ENCODE measurements at regions of chr3 and their contacts with region 1.

Region 1: GRCh38 chr3:108292905-108293328 is 3.4 kb upstream of the HHLA2 start:
- DNase-seq: peak; percentile 23
- H3K4me3 Mint-ChIP-seq: peak overlapping the region; percentile 31
- H3K27ac Mint-ChIP-seq: peak overlapping the region; percentile 38
- H3K4me1 Mint-ChIP-seq: peaks cover 48% of the 10 kb centered on the region
- H3K27me3 Mint-ChIP-seq: no peaks in the 10 kb centered on the region

Region 2: GRCh38 chr3:108124337-108125152 is 168.4 kb before region 1 on chr3:
- CTCF ChIA-PET with region 1: no interaction called
- POLR2A ChIA-PET with region 1: interaction called, 6 read pairs
- intact Hi-C with region 1: loop called (anchors 1 kb)
- DNase-seq: peak; percentile 84
- H3K4me3 Mint-ChIP-seq: peak overlapping the region; percentile 91
- H3K27ac Mint-ChIP-seq: peak overlapping the region; percentile 99
- H3K4me1 Mint-ChIP-seq: peaks cover 55% of the 10 kb centered on the region
- H3K27me3 Mint-ChIP-seq: no peaks in the 10 kb centered on the region

Region 3: GRCh38 chr3:108202837-108203236 is 90.1 kb before region 1 on chr3:
- CTCF ChIA-PET with region 1: no interaction called
- POLR2A ChIA-PET with region 1: no interaction called
- intact Hi-C with region 1: loop called (anchors 1 kb)
- DNase-seq: no peak
- H3K4me3 Mint-ChIP-seq: no peak overlapping the region
- H3K27ac Mint-ChIP-seq: no peak overlapping the region
- H3K4me1 Mint-ChIP-seq: peaks cover 32% of the 10 kb centered on the region
- H3K27me3 Mint-ChIP-seq: no peaks in the 10 kb centered on the region

Region 4: DNA sequence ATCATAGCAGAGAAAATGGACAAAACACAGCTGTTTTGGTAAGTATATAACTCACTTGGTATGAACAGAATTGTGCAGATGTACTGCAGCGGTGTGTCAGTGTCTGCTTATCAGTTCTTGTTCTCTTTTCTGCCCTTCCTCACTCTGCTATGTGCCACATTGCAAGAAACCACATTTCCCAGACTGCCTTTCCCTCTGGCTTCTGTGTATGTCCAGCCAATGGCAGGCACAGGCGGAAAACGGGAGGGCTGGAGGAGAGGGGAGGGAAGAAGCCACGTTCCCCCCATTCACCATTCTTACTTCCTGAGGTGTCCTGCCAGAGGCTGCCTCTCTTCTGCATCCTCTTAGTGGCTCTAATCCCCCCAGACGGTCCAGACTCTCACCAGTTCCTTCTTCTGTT is 18.9 kb after region 1 on chr3:
- CTCF ChIA-PET with region 1: no interaction called
- POLR2A ChIA-PET with region 1: no interaction called
- intact Hi-C with region 1: no loop called
- DNase-seq: no peak
- H3K4me3 Mint-ChIP-seq: no peak overlapping the region
- H3K27ac Mint-ChIP-seq: no peak overlapping the region
- H3K4me1 Mint-ChIP-seq: no peaks in the 10 kb centered on the region
- H3K27me3 Mint-ChIP-seq: peaks cover 2% of the 10 kb centered on the region

Region 5: DNA sequence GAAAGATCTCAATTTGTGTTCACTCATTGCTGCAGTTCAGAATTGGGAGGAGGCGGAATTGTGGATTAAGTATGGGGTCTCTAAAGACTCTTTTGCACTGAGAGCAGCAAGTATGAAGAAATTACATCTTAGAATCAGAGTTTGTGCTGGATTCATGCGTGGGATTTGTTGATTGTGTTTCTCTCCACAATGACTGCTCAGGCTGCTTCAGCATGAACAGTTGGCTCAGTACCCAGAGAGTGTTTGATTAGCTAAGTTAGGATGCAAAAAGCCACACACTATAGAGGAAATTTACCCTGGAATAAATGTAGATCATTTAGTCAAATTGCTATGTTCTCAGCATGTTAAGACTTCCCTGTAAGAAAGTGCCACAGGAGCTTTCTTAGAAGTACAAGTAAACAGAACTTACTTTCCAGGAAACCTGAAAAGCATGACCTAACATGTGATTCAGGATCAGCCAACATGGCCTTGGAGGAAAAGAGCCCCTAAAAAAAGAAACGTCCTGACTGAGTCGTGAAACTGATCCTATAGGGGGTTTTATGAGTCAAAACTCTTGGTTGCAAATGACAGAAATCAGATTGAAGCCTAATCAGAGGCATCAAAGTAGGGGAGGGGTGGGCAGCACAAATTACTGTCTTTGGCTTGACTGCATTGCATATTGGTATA is 36.0 kb after region 1 on chr3:
- CTCF ChIA-PET with region 1: no interaction called
- POLR2A ChIA-PET with region 1: interaction called, 3 read pairs
- intact Hi-C with region 1: loop called (anchors 1 kb)
- DNase-seq: no peak
- H3K4me3 Mint-ChIP-seq: no peak overlapping the region
- H3K27ac Mint-ChIP-seq: no peak overlapping the region
- H3K4me1 Mint-ChIP-seq: peaks cover 18% of the 10 kb centered on the region
- H3K27me3 Mint-ChIP-seq: peaks cover 1% of the 10 kb centered on the region

Region 6: DNA sequence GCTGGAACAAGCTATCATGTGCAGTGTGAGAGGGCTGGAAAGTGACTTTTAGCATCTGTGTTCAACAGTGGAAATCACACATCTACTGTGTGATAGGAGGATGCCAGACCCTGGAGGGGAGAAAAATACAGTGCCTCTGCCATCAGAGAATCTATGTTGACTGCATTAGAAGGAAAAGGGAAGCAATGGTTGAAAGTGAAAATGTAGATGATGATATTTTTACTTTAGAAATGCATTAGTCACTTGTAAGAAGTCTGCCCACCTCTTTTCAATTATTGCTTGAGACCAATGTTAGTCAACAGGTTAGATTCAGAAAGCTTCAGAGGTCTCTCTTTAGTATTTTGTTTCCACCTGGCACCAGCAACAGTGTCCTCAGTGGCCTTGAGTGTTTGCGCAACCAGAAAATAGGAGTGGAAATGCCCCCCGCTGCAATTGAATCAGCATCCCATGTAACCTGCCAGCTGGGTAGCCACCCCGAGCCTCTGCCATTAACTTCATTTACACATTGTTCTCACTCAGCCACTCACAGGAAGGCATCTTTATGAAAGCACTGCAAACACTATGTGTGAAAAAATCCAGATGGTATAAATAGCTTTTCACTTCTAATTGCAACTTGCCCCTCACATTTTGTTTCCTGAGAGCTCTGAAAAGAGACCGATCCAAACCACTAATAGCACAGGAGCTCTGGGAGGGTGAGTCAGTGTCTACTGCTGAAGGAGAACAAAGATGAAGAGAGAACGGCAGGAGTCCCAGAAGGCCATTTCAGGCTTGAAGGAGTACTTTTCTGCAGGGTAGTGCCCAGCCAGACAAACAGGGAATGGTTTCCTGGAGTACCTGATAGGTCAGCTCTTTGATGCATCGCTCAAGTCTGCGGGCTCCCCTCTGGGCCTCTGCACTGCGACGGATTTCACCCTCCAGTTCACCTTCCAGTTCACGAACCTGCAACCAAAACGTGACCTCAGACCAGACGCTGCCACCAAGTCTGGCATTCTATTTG is 95.5 kb after region 1 on chr3:
- CTCF ChIA-PET with region 1: no interaction called
- POLR2A ChIA-PET with region 1: interaction called, 4 read pairs
- intact Hi-C with region 1: loop called (anchors 1 kb)
- DNase-seq: peak; percentile 25
- H3K4me3 Mint-ChIP-seq: no peak overlapping the region
- H3K27ac Mint-ChIP-seq: no peak overlapping the region
- H3K4me1 Mint-ChIP-seq: peaks cover 19% of the 10 kb centered on the region
- H3K27me3 Mint-ChIP-seq: peaks cover 16% of the 10 kb centered on the region

Region 7: DNA sequence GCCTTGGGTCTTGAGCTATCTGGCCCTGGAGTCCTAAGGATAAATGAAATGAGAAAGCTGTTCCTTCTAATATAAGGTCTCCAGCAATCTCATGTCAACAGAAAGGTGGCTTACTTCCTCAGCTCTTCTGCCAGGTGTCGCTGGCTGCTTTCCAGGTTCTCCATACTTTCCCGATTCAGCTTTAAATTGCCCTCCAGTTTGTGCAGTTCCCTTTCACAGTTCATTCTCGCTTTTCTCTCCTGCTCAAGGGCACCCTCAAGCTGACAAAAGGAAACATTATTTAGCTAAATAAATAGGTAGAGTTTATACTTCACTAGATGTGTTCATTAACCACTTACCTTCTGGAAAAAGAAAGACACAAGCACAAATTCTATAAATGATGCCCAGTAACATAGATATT is 144.5 kb after region 1 on chr3:
- CTCF ChIA-PET with region 1: no interaction called
- POLR2A ChIA-PET with region 1: no interaction called
- intact Hi-C with region 1: no loop called
- DNase-seq: no peak
- H3K4me3 Mint-ChIP-seq: no peak overlapping the region
- H3K27ac Mint-ChIP-seq: no peak overlapping the region
- H3K4me1 Mint-ChIP-seq: no peaks in the 10 kb centered on the region
- H3K27me3 Mint-ChIP-seq: no peaks in the 10 kb centered on the region

Region 8: DNA sequence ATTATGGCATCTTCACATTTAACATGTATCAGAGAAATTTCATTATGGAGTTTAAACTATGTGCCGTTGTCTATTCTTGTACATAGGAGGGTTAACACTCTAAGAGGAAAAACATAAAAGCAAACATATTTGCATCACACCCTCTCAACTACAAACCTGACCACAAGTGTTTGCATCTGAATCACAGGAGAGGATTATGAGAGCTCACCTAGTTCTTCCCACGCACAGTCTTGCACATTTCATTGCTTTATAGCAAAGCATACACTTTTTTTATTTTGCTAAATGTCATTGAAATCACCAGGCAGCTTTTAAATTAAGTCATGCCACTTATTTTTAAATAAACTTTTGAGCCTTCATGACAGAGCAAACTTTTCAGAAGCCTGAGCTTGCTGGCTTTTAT is 542.2 kb after region 1 on chr3:
- CTCF ChIA-PET with region 1: no interaction called
- POLR2A ChIA-PET with region 1: no interaction called
- intact Hi-C with region 1: loop called (anchors 5 kb)
- DNase-seq: peak; percentile 49
- H3K4me3 Mint-ChIP-seq: peak overlapping the region; percentile 77
- H3K27ac Mint-ChIP-seq: peak overlapping the region; percentile 93
- H3K4me1 Mint-ChIP-seq: peaks cover 79% of the 10 kb centered on the region
- H3K27me3 Mint-ChIP-seq: no peaks in the 10 kb centered on the region